Caco-2 (cell line): ENCODE measurements at regions of chr4 and their contacts with region 1.

Region 1: GRCh38 chr4:23455456-23456158 is 434.2 kb downstream of the PPARGC1A start:
- DNase-seq: peak; percentile 35 to 37
- H3K4me3 ChIP-seq: no peak overlapping the region
- H3K4me3 Mint-ChIP-seq: no peak overlapping the region
- H3K27ac Mint-ChIP-seq: no peak overlapping the region
- H3K4me1 ChIP-seq: no peaks in the 10 kb centered on the region
- H3K4me1 Mint-ChIP-seq: no peaks in the 10 kb centered on the region
- H3K27me3 ChIP-seq: no peaks in the 10 kb centered on the region
- H3K27me3 Mint-ChIP-seq: peaks cover 9% of the 10 kb centered on the region
- CTCF ChIP-seq: peak; percentile 30 to 53

Region 2: DNA sequence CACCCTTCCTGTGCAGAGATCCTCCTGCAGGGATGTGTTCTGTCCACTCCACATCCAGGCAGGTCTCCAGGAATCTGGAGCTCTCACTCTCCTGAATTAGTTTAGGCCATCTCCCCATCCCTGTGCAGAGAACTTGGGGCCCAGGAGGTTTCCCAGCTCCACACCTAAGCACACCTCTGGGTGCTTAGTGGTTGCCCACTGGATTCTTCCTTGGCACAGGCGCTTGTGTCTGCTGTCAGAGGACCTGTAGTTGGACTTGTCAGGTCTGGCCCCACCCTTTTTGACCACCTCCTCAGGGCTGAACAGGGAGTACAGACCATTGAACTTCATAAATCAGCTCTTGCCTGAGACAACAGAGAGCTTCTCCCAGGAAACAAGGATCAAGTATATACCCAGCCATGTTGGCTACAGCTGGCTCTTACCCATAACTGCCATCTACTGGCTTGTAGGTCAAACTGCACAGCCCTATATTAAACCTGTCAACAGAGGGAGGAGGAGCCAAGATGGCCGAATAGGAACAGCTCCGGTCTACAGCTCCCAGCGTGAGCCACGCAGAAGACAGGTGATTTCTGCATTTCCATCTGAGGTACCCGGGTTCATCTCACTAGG is 158.8 kb after region 1 on chr4:
- CTCF ChIA-PET with region 1: interaction called, 5 read pairs
- POLR2A ChIA-PET with region 1: no interaction called
- intact Hi-C with region 1: loop called (anchors 5 kb)
- DNase-seq: peak; percentile 33 to 34
- H3K4me3 ChIP-seq: no peak overlapping the region
- H3K4me3 Mint-ChIP-seq: no peak overlapping the region
- H3K27ac Mint-ChIP-seq: no peak overlapping the region
- H3K4me1 ChIP-seq: no peaks in the 10 kb centered on the region
- H3K4me1 Mint-ChIP-seq: no peaks in the 10 kb centered on the region
- H3K27me3 ChIP-seq: no peaks in the 10 kb centered on the region
- H3K27me3 Mint-ChIP-seq: peaks cover 2% of the 10 kb centered on the region
- CTCF ChIP-seq: peak; percentile 26 to 28

Region 3: GRCh38 chr4:23717528-23718248 is 262.1 kb after region 1 on chr4:
- CTCF ChIA-PET with region 1: no interaction called
- POLR2A ChIA-PET with region 1: no interaction called
- intact Hi-C with region 1: loop called (anchors 1 kb)
- DNase-seq: peak in 1 of 2 experiments; percentile 41
- H3K4me3 ChIP-seq: no peak overlapping the region
- H3K4me3 Mint-ChIP-seq: no peak overlapping the region
- H3K27ac Mint-ChIP-seq: no peak overlapping the region
- H3K4me1 ChIP-seq: no peaks in the 10 kb centered on the region
- H3K4me1 Mint-ChIP-seq: no peaks in the 10 kb centered on the region
- H3K27me3 ChIP-seq: no peaks in the 10 kb centered on the region
- H3K27me3 Mint-ChIP-seq: no peaks in the 10 kb centered on the region
- CTCF ChIP-seq: peak; percentile 22 to 33